Caco-2 (cell line): ENCODE measurements at regions of chr22 and their contacts with region 1.

Region 1: GRCh38 chr22:50691521-50691920 is 18.9 kb downstream of the SHANK3 start:
- DNase-seq: peak; percentile 34 to 49
- H3K4me3 ChIP-seq: no peak overlapping the region
- H3K4me3 Mint-ChIP-seq: no peak overlapping the region
- H3K27ac Mint-ChIP-seq: no peak overlapping the region
- H3K4me1 ChIP-seq: no peaks in the 10 kb centered on the region
- H3K4me1 Mint-ChIP-seq: no peaks in the 10 kb centered on the region
- H3K27me3 ChIP-seq: no peaks in the 10 kb centered on the region
- H3K27me3 Mint-ChIP-seq: no peaks in the 10 kb centered on the region
- CTCF ChIP-seq: peak; percentile 51 to 76

Region 2: DNA sequence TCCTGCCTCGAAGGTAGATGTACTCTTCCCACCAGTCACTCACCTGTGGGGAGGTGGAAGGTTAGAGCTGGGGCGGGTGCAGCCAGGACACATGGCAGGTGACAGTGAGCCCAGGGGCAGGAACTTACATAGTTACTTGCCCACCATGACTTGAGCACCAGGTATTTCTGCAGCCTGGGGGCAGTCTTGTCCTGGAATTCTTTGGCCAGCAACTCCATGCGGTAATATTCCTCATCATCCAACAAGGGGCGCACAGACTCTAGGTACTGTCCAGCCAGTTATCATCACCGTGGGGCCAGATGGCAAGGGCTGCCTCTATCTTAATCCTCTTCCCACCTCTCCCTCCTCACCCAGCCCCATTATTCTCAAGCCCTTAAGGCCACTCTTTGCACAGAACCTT is 115.5 kb before region 1 on chr22:
- CTCF ChIA-PET with region 1: no interaction called
- POLR2A ChIA-PET with region 1: no interaction called
- intact Hi-C with region 1: loop called (anchors 1 kb)
- DNase-seq: peak; percentile 67 to 73
- H3K4me3 ChIP-seq: no peak overlapping the region
- H3K4me3 Mint-ChIP-seq: no peak overlapping the region
- H3K27ac Mint-ChIP-seq: no peak overlapping the region
- H3K4me1 ChIP-seq: no peaks in the 10 kb centered on the region
- H3K4me1 Mint-ChIP-seq: no peaks in the 10 kb centered on the region
- H3K27me3 ChIP-seq: no peaks in the 10 kb centered on the region
- H3K27me3 Mint-ChIP-seq: no peaks in the 10 kb centered on the region
- CTCF ChIP-seq: peak; percentile 41 to 59

Region 3: GRCh38 chr22:50627642-50628542 is 63.6 kb before region 1 on chr22 and contains the start of gene ARSA:
- CTCF ChIA-PET with region 1: no interaction called
- POLR2A ChIA-PET with region 1: no interaction called
- intact Hi-C with region 1: loop called (anchors 2 kb)
- DNase-seq: peak; percentile 80 to 83
- H3K4me3 ChIP-seq: peak within 1 kb of the TSS; percentile 72
- H3K4me3 Mint-ChIP-seq: peak within 1 kb of the TSS; percentile 77
- H3K27ac Mint-ChIP-seq: peak within 1 kb of the TSS; percentile 58
- H3K4me1 ChIP-seq: peaks cover 17% of the 10 kb centered on the region
- H3K4me1 Mint-ChIP-seq: peaks cover 10% of the 10 kb centered on the region
- H3K27me3 ChIP-seq: no peaks in the 10 kb centered on the region
- H3K27me3 Mint-ChIP-seq: no peaks in the 10 kb centered on the region
- CTCF ChIP-seq: peak; percentile 24 to 70
- total RNA-seq, gene ARSA: 11.5 TPM in 2 replicates